Transverse colon (tissue), 4 donors: ENCODE measurements at regions of chr9 and their contacts with region 1.

Region 1: GRCh38 chr9:130166399-130166798 is 5.8 kb upstream of the NCS1 start:
- DNase-seq: no peak
- H3K4me3 ChIP-seq: no peak overlapping the region
- H3K27ac ChIP-seq: no peak overlapping the region
- H3K4me1 ChIP-seq: peaks cover 0 to under 1% (median under 1%) of the 10 kb centered on the region in 4 donors
- H3K27me3 ChIP-seq: peaks cover 10% of the 10 kb centered on the region
- CTCF ChIP-seq: no peak
- EP300 ChIP-seq: no peak
- POLR2A ChIP-seq: no peak

Region 2: GRCh38 chr9:130128733-130129431 is 37.5 kb before region 1 on chr9:
- in situ Hi-C with region 1: no loop called
- intact Hi-C with region 1: loop called (anchors 1 kb)
- DNase-seq: peak; percentile 39
- H3K4me3 ChIP-seq: no peak overlapping the region
- H3K27ac ChIP-seq: peak overlapping the region; percentile 72 to 80 (median 75)
- H3K4me1 ChIP-seq: peaks cover 0 to 15% (median 0%) of the 10 kb centered on the region in 4 donors
- H3K27me3 ChIP-seq: no peaks in the 10 kb centered on the region
- CTCF ChIP-seq: no peak
- EP300 ChIP-seq: no peak
- POLR2A ChIP-seq: no peak

Region 3: GRCh38 chr9:130143958-130144366 is 22.4 kb before region 1 on chr9:
- in situ Hi-C with region 1: no loop called
- intact Hi-C with region 1: no loop called
- DNase-seq: peak; percentile 20
- H3K4me3 ChIP-seq: no peak overlapping the region
- H3K27ac ChIP-seq: peak overlapping the region in 3 of 4 donors; percentile 50 to 84 (median 63)
- H3K4me1 ChIP-seq: peaks cover 4 to 20% (median 16%) of the 10 kb centered on the region in 4 donors
- H3K27me3 ChIP-seq: peaks cover 22% of the 10 kb centered on the region
- CTCF ChIP-seq: no peak
- EP300 ChIP-seq: no peak
- POLR2A ChIP-seq: no peak

Region 4: DNA sequence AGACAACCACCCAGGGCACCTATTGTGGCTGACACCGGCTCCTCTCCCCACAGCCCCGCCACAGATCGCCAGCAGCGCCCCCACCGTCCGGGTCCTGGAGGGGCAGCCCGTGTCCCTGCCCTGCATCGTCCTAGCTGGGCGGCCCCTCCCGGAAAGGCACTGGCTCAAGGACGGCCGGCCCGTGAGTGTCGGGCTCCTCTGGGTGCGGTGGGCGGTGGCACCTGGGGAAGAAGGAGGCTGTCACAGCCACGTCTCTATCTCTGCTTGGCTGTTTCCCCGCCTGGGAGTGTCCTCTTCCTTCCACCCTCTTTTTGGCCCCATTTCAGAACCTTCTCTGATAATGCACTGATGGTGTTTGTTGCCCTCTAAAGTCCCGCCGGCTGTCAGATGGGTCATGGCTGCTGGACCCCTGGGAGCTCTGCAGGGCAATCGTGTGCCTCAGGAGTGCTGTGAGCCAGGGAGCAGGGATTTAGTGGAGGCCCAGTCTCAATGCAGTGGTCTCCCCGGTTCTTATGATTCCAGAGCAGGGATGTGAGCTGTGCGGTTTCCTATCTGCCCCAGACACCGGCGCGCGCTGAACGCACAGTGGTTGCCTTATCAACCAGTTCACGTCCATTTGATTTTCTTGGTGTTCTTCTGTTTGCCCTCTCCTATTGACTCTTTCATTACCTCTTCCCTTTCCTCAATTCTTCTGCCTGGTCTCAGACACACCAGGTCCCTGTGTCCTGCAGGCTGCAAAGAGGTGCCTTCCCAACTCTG is 154.5 kb after region 1 on chr9:
- in situ Hi-C with region 1: no loop called
- intact Hi-C with region 1: no loop called
- DNase-seq: peak; percentile 21
- H3K4me3 ChIP-seq: no peak overlapping the region
- H3K27ac ChIP-seq: peak overlapping the region in 2 of 4 donors; percentile 70 to 82
- H3K4me1 ChIP-seq: peaks cover 0 to 25% (median 7%) of the 10 kb centered on the region in 4 donors
- H3K27me3 ChIP-seq: peaks cover 41% of the 10 kb centered on the region
- CTCF ChIP-seq: no peak
- EP300 ChIP-seq: no peak
- POLR2A ChIP-seq: no peak